Naive thymus-derived CD4-positive, alpha-beta T cell (primary cell): ENCODE measurements at regions of chr1 and their contacts with region 1.

Region 1: GRCh38 chr1:8026153-8026975 is at the start of gene ERRFI1:
- DNase-seq: peak; percentile 70 to 92 (median 77)
- ATAC-seq: peak; percentile 97
- H3K4me3 ChIP-seq: peak within 1 kb of the TSS; percentile 36
- H3K4me3 Mint-ChIP-seq: peak within 1 kb of the TSS; percentile 78 to 96 (median 88)
- H3K27ac ChIP-seq: peak within 1 kb of the TSS; percentile 49
- H3K27ac Mint-ChIP-seq: peak within 1 kb of the TSS; percentile 16 to 89 (median 65)
- H3K4me1 ChIP-seq: peaks cover 6 to 11% of the 10 kb centered on the region in 2 donors
- H3K4me1 Mint-ChIP-seq: peaks cover 7 to 12% (median 10%) of the 10 kb centered on the region in 7 donors
- H3K27me3 ChIP-seq: peaks cover 0 to 7% of the 10 kb centered on the region in 2 donors
- H3K27me3 Mint-ChIP-seq: peaks cover 7 to 73% (median 23%) of the 10 kb centered on the region in 5 donors
- total RNA-seq, gene ERRFI1: 0.36 to 1.7 (median 0.98) TPM

Region 2: GRCh38 chr1:7680955-7681268 is 345.5 kb before region 1 on chr1:
- CTCF ChIA-PET with region 1: no interaction called
- POLR2A ChIA-PET with region 1: no interaction called
- intact Hi-C with region 1: no loop called
- DNase-seq: peak in 1 of 9 donors; percentile 4
- ATAC-seq: no peak
- H3K4me3 ChIP-seq: peak overlapping the region; percentile 75
- H3K4me3 Mint-ChIP-seq: peak overlapping the region in 9 of 10 donors; percentile 29 to 84 (median 74)
- H3K27ac ChIP-seq: no peak overlapping the region
- H3K27ac Mint-ChIP-seq: no peak overlapping the region
- H3K4me1 ChIP-seq: no peaks in the 10 kb centered on the region
- H3K4me1 Mint-ChIP-seq: peaks cover 0 to 4% (median 0%) of the 10 kb centered on the region in 7 donors
- H3K27me3 ChIP-seq: no peaks in the 10 kb centered on the region
- H3K27me3 Mint-ChIP-seq: peaks cover 0 to 18% (median 0%) of the 10 kb centered on the region in 5 donors

Region 3: GRCh38 chr1:7983086-7983778 is 43.1 kb before region 1 on chr1:
- CTCF ChIA-PET with region 1: interaction called, 3 read pairs
- POLR2A ChIA-PET with region 1: no interaction called
- intact Hi-C with region 1: loop called in 1 of 2 experiments (anchors 2 kb)
- DNase-seq: no peak
- ATAC-seq: no peak
- H3K4me3 ChIP-seq: no peak overlapping the region
- H3K4me3 Mint-ChIP-seq: no peak overlapping the region
- H3K27ac ChIP-seq: no peak overlapping the region
- H3K27ac Mint-ChIP-seq: no peak overlapping the region
- H3K4me1 ChIP-seq: peaks cover 0 to 8% of the 10 kb centered on the region in 2 donors
- H3K4me1 Mint-ChIP-seq: peaks cover 5 to 13% (median 10%) of the 10 kb centered on the region in 7 donors
- H3K27me3 ChIP-seq: no peaks in the 10 kb centered on the region
- H3K27me3 Mint-ChIP-seq: no peaks in the 10 kb centered on the region

Region 4: GRCh38 chr1:8154621-8155052 is 128.3 kb after region 1 on chr1:
- CTCF ChIA-PET with region 1: no interaction called
- POLR2A ChIA-PET with region 1: no interaction called
- intact Hi-C with region 1: loop called (anchors 1 to 10 kb)
- DNase-seq: no peak
- ATAC-seq: no peak
- H3K4me3 ChIP-seq: no peak overlapping the region
- H3K4me3 Mint-ChIP-seq: peak overlapping the region in 6 of 10 donors; percentile 9 to 80 (median 34)
- H3K27ac ChIP-seq: no peak overlapping the region
- H3K27ac Mint-ChIP-seq: peak overlapping the region in 5 of 9 donors; percentile 25 to 99 (median 63)
- H3K4me1 ChIP-seq: peaks cover 30 to 37% of the 10 kb centered on the region in 2 donors
- H3K4me1 Mint-ChIP-seq: peaks cover 36 to 55% (median 53%) of the 10 kb centered on the region in 7 donors
- H3K27me3 ChIP-seq: no peaks in the 10 kb centered on the region
- H3K27me3 Mint-ChIP-seq: peaks cover 0 to 36% (median 13%) of the 10 kb centered on the region in 5 donors

Region 5: DNA sequence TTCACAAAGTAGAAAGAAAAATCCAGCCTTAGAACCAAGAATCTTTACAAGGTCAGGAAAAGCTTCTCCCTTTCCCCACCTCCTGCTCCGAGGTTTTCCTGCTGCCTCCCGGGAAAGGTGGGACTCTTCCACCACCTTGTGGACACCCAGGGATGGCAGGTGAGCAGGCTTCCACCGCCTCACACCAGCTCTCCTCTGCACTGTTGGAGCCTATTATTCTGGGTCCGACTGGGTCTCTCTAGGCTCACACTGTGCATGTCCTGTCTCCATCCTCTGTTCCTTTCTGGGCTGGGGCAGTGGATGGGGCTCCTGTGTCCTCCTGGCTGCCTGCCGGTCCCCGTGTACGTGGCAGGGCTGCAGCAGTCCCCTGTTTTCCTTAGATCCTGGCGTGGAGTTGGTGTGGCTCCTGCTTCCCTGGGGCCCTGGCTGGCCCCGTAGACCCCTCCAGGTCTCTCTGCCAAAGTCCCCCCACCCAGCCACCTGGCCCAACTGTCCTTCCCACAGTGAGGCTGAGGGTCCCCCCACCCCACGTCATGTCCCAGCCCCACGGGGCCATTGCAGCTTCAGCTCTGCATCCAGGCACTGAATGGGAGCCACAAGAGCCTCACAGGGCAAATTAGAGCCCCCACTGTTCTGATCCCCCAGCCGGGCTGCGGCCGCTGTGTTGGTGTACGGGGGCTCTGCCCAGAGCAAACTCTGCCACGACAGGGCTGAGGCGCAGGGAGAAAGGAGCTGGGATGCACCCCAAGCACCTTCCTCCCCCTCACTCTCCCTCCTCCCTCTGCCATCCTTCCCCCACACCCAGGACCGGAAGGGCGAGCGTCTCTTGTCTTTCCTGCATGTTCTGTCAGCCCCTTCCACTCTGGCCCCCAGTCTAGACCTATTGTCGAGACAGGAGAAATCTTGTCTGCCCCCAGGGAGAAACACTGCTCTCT is 288.2 kb after region 1 on chr1:
- CTCF ChIA-PET with region 1: interaction called, 17 read pairs
- POLR2A ChIA-PET with region 1: interaction called, 3 read pairs
- intact Hi-C with region 1: loop called (anchors 1 kb)
- DNase-seq: peak in 8 of 9 donors; percentile 14 to 56 (median 46)
- ATAC-seq: peak; percentile 56
- H3K4me3 ChIP-seq: no peak overlapping the region
- H3K4me3 Mint-ChIP-seq: peak overlapping the region in 5 of 10 donors; percentile 9 to 48 (median 32)
- H3K27ac ChIP-seq: no peak overlapping the region
- H3K27ac Mint-ChIP-seq: no peak overlapping the region
- H3K4me1 ChIP-seq: peaks cover 4 to 11% of the 10 kb centered on the region in 2 donors
- H3K4me1 Mint-ChIP-seq: peaks cover 6 to 26% (median 23%) of the 10 kb centered on the region in 7 donors
- H3K27me3 ChIP-seq: peaks cover 5 to 8% of the 10 kb centered on the region in 2 donors
- H3K27me3 Mint-ChIP-seq: peaks cover 7 to 51% (median 33%) of the 10 kb centered on the region in 5 donors

Region 6: DNA sequence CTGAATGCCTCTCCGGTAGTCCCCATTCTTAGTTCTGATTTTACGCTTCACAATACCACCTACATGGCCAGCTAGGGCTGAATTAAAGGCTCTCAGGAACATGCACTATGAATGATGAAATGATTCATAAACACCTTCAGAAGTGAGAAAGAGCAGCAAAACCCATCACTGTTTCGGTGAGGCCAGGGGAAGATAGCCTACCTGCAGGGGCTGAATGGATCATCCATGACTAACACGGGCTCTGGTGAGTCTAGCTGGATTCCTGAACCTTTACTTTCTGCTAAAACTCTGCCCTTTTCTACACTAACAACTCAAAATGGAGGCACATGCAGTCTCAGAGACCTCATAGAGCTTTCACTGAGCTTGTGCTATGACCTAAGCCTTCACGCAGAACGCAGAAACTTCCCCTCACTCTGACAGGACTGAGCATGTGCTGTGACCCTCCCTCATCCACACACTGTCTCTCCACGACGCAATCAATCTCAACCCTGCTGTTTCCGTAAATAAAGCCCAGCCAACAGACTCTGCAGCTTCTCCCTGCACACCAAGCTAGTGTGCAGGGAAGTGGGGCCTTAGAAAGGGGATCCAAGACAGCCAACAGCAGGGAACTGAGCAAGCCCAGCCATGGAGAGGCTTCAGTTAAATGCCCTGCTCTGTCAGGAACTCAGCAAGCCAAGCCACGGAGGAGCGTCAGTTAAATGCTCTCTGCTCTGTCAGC is 499.4 kb after region 1 on chr1:
- CTCF ChIA-PET with region 1: no interaction called
- POLR2A ChIA-PET with region 1: no interaction called
- intact Hi-C with region 1: loop called in 1 of 2 experiments (anchors 5 kb)
- DNase-seq: peak; percentile 31 to 95 (median 88)
- ATAC-seq: peak; percentile 96
- H3K4me3 ChIP-seq: peak overlapping the region; percentile 60
- H3K4me3 Mint-ChIP-seq: no peak overlapping the region
- H3K27ac ChIP-seq: peak overlapping the region; percentile 95
- H3K27ac Mint-ChIP-seq: no peak overlapping the region
- H3K4me1 ChIP-seq: peaks cover 12 to 30% of the 10 kb centered on the region in 2 donors
- H3K4me1 Mint-ChIP-seq: peaks cover 22 to 57% (median 35%) of the 10 kb centered on the region in 7 donors
- H3K27me3 ChIP-seq: no peaks in the 10 kb centered on the region
- H3K27me3 Mint-ChIP-seq: no peaks in the 10 kb centered on the region

Region 7: DNA sequence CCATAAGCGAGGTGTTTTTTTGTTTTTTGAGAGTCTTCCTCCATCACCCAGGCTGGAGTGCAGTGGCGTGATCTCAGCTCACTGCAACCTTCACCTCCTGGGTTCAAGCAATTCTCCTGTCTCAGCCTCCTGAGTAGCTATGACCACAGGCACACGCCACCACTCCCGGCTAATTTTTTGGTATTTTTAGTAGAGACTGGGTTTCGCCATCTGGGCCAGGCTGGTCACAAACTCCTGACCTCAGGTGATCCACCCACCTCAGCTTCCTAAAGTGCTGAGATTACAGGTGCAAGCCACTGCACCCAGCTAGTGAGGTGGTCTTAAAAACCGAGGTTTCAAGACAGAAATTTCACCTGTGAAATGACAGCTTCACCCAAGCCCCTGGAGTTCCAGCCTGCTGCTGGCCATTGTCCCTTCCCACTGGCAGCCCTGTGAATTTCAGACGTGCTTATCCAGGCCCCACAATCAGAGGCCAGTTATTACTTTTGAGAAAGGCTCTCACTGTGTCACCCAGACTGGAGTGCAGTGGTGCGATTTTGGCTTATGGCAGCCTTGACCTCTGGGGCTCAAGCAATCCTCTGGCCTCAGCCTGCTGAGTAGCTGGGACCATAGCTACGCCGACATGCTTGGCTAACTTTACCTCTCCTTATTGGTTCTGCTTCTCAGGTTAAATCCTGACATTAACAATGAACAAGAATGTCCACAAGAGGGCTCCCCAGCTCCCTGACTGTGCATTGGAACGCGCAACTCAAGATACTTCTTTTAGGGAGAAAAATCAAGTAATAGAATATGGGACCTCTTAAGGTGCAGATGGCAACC is 832.7 kb after region 1 on chr1:
- CTCF ChIA-PET with region 1: no interaction called
- POLR2A ChIA-PET with region 1: no interaction called
- intact Hi-C with region 1: loop called in 1 of 2 experiments (anchors 10 kb)
- DNase-seq: peak in 7 of 9 donors; percentile 52 to 73 (median 61)
- ATAC-seq: peak; percentile 83
- H3K4me3 ChIP-seq: no peak overlapping the region
- H3K4me3 Mint-ChIP-seq: peak overlapping the region in 1 of 10 donors; percentile 61
- H3K27ac ChIP-seq: no peak overlapping the region
- H3K27ac Mint-ChIP-seq: peak overlapping the region; percentile 45 to 89 (median 78)
- H3K4me1 ChIP-seq: no peaks in the 10 kb centered on the region
- H3K4me1 Mint-ChIP-seq: peaks cover 0 to 48% (median 10%) of the 10 kb centered on the region in 7 donors
- H3K27me3 ChIP-seq: no peaks in the 10 kb centered on the region
- H3K27me3 Mint-ChIP-seq: no peaks in the 10 kb centered on the region